ENCODE measurements at regions of chr4 and their contacts with region 1.

Region 1: DNA sequence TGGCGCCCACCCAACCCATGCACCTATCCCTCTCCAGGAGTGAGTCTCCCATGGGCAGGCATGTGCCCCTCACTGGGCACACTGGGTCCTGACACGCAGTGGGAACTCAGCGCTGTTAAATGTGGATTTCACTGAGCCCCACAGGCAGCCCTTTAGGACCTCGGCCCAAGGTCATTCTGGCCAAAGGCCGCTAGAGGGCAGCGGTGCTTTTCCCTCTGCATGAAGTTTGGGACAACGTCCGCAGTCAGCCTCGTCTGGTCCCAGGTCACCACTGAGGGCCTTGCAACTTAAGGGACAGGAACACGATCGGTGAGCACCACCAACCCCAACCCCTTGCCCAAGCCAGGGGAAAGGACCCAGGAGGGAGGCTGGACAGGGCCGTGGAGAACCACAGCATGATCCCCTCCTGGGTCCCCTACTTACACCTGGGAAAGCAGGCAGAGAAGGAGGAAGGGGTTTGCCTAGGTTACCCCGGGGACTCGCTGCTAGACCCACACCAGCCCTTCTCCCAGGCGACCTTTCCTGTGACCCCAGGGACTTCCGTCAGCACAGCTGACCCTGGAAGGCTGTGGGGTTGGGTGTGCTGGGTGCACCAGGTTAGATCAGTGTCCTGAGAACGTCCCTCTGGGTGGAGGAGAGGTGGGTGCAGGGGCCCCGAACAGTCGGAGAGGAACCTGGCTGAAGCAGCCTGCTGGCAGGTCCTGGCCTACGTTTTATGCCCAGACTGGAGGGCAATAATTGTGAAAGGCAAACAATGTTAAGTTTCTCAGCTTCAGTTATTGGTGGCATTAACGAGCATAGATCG is 24.0 kb downstream of the CYTL1 start:
- DNase-seq: peak; percentile 81 to 86 (median 84)
- ATAC-seq: peak; percentile 98
- H3K4me3 ChIP-seq: no peak overlapping the region
- H3K27ac ChIP-seq: no peak overlapping the region
- H3K4me1 ChIP-seq: peaks cover 2 to 22% of the 10 kb centered on the region in 2 experiments; a peak in 4 of 5 replicates
- H3K27me3 ChIP-seq: peaks cover 0 to 25% of the 10 kb centered on the region in 2 experiments; a peak in 2 of 5 replicates
- CTCF ChIP-seq: peak; percentile 89 to 95 (median 95)
- EP300 ChIP-seq: no peak; the same call in 1 of the 2 replicates
- POLR2A ChIP-seq: no peak
- RAD21 ChIP-seq: peak; percentile 94 to 95

Region 2: GRCh38 chr4:5142726-5143125 is 147.4 kb after region 1 on chr4:
- CTCF ChIA-PET with region 1: no interaction called
- POLR2A ChIA-PET with region 1: no interaction called
- in situ Hi-C with region 1: loop called (anchors 5 kb)
- intact Hi-C with region 1: loop called (anchors 1 kb)
- DNase-seq: peak; percentile 26 to 51 (median 36)
- ATAC-seq: peak; percentile 70
- H3K4me3 ChIP-seq: no peak overlapping the region
- H3K27ac ChIP-seq: no peak overlapping the region
- H3K4me1 ChIP-seq: peaks cover 3 to 13% of the 10 kb centered on the region in 2 experiments; a peak in 2 of 5 replicates
- H3K27me3 ChIP-seq: peaks cover 0 to 10% of the 10 kb centered on the region in 2 experiments; a peak in 2 of 5 replicates
- CTCF ChIP-seq: peak; percentile 51 to 70 (median 58); a peak in 5 of 6 replicates
- EP300 ChIP-seq: no peak
- POLR2A ChIP-seq: no peak
- RAD21 ChIP-seq: peak; percentile 41 to 74

Region 3: DNA sequence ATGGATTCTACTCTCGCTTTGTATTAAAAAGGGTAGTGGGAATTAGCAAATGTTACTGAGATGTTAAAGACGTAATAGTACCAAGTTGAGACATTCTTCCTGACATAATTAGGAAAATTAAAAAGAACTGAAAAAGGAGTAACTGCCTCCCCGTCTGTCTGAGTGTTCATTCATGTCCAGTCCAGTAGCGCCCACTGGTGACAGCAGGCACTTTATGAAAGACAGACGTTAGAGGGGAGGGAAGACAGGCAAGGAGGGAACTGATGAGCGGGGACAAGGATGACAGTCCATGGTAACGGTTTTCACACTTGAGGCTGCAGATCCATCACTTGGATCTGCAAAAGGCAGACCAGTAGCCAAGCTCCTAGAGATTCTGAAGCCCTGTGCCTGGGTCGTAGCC is 382.7 kb after region 1 on chr4:
- CTCF ChIA-PET with region 1: interaction called, 3 read pairs
- POLR2A ChIA-PET with region 1: no interaction called
- in situ Hi-C with region 1: loop called (anchors 10 kb)
- intact Hi-C with region 1: loop called (anchors 1 kb)
- DNase-seq: peak; percentile 39 to 51 (median 46)
- ATAC-seq: peak; percentile 78
- H3K4me3 ChIP-seq: no peak overlapping the region
- H3K27ac ChIP-seq: no peak overlapping the region
- H3K4me1 ChIP-seq: no peaks in the 10 kb centered on the region
- H3K27me3 ChIP-seq: no peaks in the 10 kb centered on the region; a peak in 1 of 5 replicates
- CTCF ChIP-seq: peak; percentile 62 to 77 (median 68)
- EP300 ChIP-seq: no peak
- POLR2A ChIP-seq: no peak
- RAD21 ChIP-seq: peak; percentile 49 to 68

Region 4: DNA sequence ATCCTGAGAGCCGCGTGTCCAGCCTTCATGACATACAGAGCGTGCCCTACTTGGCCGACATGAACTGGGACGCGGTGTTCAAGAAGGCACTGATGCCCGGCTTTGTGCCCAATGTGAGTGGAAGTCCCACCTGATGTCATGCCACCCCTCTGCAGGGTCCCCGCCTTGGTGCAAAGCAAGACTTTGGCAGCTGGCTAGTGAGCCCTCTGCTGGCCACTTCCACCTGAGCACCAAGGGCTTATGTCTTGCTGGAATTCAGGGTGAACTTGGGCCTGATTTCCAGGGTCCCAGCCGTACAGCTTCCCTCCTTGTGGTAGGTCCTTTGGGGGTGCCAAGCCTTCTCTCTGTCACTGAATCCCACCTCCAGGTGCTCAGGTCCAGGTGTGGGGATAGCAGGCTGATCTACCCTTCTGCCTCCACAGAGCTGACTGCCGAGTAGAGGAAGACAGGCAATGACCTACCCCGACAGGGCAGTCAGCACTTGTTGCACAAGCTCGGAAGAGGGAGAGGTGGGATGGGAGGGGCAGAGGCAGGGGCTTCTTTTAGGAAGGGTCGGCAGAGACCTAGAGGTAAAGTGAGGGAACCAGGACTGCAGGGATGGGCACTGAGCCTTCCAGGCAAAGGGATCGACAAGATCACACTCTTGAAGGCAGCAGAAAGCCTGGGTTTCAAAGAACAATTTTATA is 465.0 kb after region 1 on chr4:
- CTCF ChIA-PET with region 1: no interaction called
- POLR2A ChIA-PET with region 1: no interaction called
- in situ Hi-C with region 1: no loop called
- intact Hi-C with region 1: loop called (anchors 1 kb)
- DNase-seq: peak; percentile 45 to 52 (median 50)
- ATAC-seq: peak; percentile 85
- H3K4me3 ChIP-seq: no peak overlapping the region
- H3K27ac ChIP-seq: no peak overlapping the region
- H3K4me1 ChIP-seq: no peaks in the 10 kb centered on the region; a peak in 1 of 5 replicates
- H3K27me3 ChIP-seq: peaks cover 9 to 55% of the 10 kb centered on the region in 2 experiments; a peak in 4 of 5 replicates
- CTCF ChIP-seq: peak; percentile 56 to 74 (median 61)
- EP300 ChIP-seq: no peak
- POLR2A ChIP-seq: no peak
- RAD21 ChIP-seq: peak; percentile 41 to 57

Region 5: GRCh38 chr4:5812506-5813229 is 817.4 kb after region 1 on chr4:
- CTCF ChIA-PET with region 1: no interaction called
- POLR2A ChIA-PET with region 1: no interaction called
- in situ Hi-C with region 1: no loop called
- intact Hi-C with region 1: loop called (anchors 5 kb)
- DNase-seq: peak; percentile 71 to 78 (median 76)
- ATAC-seq: peak; percentile 98
- H3K4me3 ChIP-seq: no peak overlapping the region
- H3K27ac ChIP-seq: no peak overlapping the region
- H3K4me1 ChIP-seq: no peaks in the 10 kb centered on the region; a peak in 1 of 5 replicates
- H3K27me3 ChIP-seq: no peaks in the 10 kb centered on the region; a peak in 1 of 5 replicates
- CTCF ChIP-seq: peak; percentile 66 to 89 (median 84)
- EP300 ChIP-seq: no peak
- POLR2A ChIP-seq: no peak
- RAD21 ChIP-seq: peak; percentile 63 to 71; a peak in 3 of 4 replicates